AG04450 (cell line): ENCODE measurements at regions of chr1 and their contacts with region 1.

Region 1: DNA sequence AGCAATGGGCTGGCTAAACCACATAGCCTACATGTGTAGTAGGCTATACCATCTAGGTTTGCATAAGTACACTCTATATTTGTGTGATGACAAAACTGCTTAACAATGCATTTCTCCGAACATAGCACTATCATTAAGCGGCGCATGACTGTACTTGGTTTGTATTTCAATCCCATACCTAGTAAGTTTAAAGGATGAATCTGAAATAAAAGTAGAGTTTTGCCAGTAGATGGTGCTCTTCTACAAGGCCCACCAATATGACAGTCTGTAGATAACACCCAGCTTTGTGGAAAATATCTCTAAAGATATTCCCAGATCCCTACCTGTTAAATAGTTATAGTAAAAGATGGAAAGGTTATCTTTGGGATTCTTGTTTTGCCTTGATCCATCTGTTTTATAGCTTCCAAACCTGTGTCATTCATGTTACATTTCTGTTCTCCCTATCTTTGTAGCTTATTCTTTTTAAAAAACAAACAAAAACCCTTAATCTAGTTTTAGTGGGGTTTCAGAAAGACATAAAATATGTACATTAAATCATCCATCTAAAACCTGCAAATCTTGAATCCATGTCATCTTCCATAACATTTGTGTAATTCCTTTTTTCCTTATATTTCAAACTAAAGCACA is 33.9 kb upstream of the ASPM start:
- DNase-seq: peak; percentile 71
- H3K4me3 ChIP-seq: no peak overlapping the region
- H3K27ac ChIP-seq: no peak overlapping the region
- H3K27me3 ChIP-seq: no peaks in the 10 kb centered on the region
- CTCF ChIP-seq: peak; percentile 77

Region 2: DNA sequence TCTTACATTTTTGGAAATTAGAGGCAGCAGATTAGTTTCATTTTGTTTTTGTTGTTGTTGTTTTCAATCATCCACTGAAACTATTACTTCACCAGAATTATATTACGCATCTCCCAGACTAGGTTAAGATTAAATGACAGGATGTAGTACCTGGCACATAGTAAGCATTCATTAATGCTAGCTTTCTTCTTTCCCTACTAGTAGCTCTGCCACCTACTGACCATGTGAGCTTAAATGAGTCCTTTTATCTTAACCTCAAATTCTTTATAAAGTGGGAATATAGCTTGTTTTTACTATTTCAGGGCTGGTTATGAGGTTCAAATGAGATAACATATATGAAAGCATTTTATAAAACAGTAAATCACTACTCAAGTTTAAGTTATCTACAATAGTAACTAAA is 23.7 kb before region 1 on chr1:
- CTCF ChIA-PET with region 1: interaction called, 26 read pairs
- POLR2A ChIA-PET with region 1: no interaction called
- DNase-seq: no peak
- H3K4me3 ChIP-seq: no peak overlapping the region
- H3K27ac ChIP-seq: no peak overlapping the region
- H3K27me3 ChIP-seq: no peaks in the 10 kb centered on the region
- CTCF ChIP-seq: no peak

Region 3: GRCh38 chr1:197356723-197357533 is 176.6 kb after region 1 on chr1:
- CTCF ChIA-PET with region 1: interaction called, 40 read pairs
- POLR2A ChIA-PET with region 1: no interaction called
- DNase-seq: no peak
- H3K4me3 ChIP-seq: no peak overlapping the region
- H3K27ac ChIP-seq: no peak overlapping the region
- H3K27me3 ChIP-seq: no peaks in the 10 kb centered on the region
- CTCF ChIP-seq: peak; percentile 73